Activated CD4-positive, alpha-beta memory T cell treated with anti-CD3 and anti-CD28 coated beads for 36 hours (primary cell): ENCODE measurements at regions of chr17 and their contacts with region 1.

Region 1: DNA sequence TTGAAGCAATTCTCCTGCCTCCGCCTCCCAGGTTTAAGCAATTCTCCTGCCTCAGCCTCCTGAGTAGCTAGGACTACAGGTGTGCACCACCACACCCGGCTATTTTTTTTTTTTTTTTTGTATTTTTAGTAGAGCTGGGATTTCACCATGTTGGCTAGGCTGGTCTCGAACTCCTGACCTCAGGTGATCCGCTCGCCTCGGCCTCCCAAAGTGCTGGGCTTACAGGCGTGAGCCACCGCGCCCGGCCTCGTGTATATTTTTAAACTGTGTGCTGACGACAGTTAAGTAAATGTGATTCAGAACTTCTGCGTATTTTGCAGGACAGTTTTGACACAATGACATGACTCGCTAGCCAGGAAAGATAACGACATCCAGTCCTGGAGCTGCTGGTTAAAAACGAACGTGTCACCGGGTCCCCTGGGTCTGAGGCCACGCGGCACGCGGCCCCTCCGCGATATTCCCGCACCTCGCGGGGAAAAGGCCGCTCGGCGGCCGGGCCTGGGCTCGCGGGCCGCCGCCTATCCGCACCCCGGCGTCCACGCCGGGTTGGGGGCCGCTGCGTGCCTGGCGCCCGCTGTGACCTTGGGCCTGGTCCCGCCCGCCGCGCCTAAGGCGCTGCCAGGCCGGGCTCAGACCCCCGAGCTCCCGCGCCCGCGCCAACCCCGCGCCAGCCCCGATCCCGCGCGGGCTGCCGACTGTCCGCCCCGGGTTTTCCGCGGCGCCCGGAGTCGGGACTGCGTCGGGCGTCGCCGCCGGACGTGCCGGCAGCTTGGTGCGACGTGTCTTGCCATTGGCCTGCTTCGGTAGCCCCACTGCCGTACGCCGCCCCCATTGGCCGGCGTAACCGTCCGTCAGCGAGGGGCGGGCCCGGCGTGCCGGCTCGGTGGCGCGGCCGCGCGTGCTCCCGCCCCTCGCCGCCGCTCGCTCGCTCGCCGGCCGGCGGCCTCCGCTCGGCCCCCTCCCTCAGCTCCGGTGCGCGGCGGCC is at the start of gene FOXK2:
- DNase-seq: peak; percentile 95
- H3K4me3 Mint-ChIP-seq: peak within 1 kb of the TSS; percentile 89
- H3K27ac Mint-ChIP-seq: peak within 1 kb of the TSS; percentile 88
- H3K4me1 Mint-ChIP-seq: peaks cover 20% of the 10 kb centered on the region
- H3K27me3 Mint-ChIP-seq: no peaks in the 10 kb centered on the region
- total RNA-seq, gene FOXK2: 49.3 to 60.8 TPM

Region 2: GRCh38 chr17:82450170-82451106 is 68.7 kb before region 1 on chr17 and contains the start of gene CYBC1:
- CTCF ChIA-PET with region 1: no interaction called
- POLR2A ChIA-PET with region 1: interaction called, 15 read pairs
- intact Hi-C with region 1: loop called (anchors 2 kb)
- DNase-seq: peak; percentile 97
- H3K4me3 Mint-ChIP-seq: peak within 1 kb of the TSS; percentile 85
- H3K27ac Mint-ChIP-seq: peak within 1 kb of the TSS; percentile 99
- H3K4me1 Mint-ChIP-seq: peaks cover 46% of the 10 kb centered on the region
- H3K27me3 Mint-ChIP-seq: no peaks in the 10 kb centered on the region
- total RNA-seq, gene CYBC1: 333 to 343 TPM

Region 3: DNA sequence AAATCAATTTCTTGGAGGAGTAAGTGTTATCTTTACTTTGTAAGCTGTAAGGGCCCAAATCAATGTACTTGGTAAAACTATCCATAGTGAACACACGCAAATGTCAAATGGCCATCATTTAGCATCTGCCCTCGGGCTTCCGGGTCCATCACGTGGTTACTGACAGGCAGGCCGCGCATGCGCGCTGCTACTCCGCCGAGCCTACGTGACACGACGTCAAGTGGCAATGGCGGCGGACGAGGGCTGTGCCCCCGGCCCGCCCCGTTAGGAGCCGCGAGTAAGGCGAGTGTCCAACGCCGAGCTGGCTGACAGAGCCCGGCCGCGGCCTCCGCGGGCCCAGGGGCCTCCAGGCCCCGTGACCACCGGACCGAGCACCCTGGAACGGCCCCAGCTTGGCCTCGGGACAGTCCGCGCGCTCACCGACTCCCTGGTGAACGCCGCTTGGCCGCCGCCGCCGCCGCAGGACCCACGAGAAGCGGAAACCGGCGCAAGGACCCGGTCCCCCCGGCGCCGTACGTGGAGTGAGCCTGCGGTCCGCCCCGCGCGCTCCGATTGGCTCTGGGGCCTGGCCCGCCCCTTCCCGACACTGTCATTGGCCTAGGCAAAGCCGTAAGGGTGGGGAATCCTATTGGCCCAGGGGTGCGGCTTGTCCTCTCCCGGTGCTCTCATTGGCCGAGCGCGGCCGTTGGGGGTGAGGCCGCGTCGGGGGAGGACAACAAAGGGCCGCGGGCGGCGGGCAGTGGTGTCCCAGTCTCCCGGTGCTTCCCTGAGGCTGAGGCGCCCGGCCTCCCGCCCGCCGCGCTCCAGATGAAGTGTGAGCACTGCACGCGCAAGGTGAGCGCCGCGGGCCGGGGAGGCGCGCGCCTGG is 60.9 kb before region 1 on chr17 and contains the start of gene NARF:
- CTCF ChIA-PET with region 1: no interaction called
- POLR2A ChIA-PET with region 1: interaction called, 10 read pairs
- intact Hi-C with region 1: loop called (anchors 2 kb)
- DNase-seq: peak; percentile 97
- H3K4me3 Mint-ChIP-seq: peak within 1 kb of the TSS; percentile 78
- H3K27ac Mint-ChIP-seq: peak within 1 kb of the TSS; percentile 97
- H3K4me1 Mint-ChIP-seq: peaks cover 40% of the 10 kb centered on the region
- H3K27me3 Mint-ChIP-seq: no peaks in the 10 kb centered on the region
- total RNA-seq, gene NARF: 101 to 110 TPM

Region 4: GRCh38 chr17:82494236-82495055 is 24.7 kb before region 1 on chr17:
- CTCF ChIA-PET with region 1: interaction called, 17 read pairs
- POLR2A ChIA-PET with region 1: interaction called, 6 read pairs
- intact Hi-C with region 1: loop called (anchors 1 kb)
- DNase-seq: peak; percentile 94
- H3K4me3 Mint-ChIP-seq: peak overlapping the region; percentile 68
- H3K27ac Mint-ChIP-seq: peak overlapping the region; percentile 89
- H3K4me1 Mint-ChIP-seq: peaks cover 22% of the 10 kb centered on the region
- H3K27me3 Mint-ChIP-seq: no peaks in the 10 kb centered on the region

Region 5: GRCh38 chr17:82507631-82508175 is 11.4 kb before region 1 on chr17:
- CTCF ChIA-PET with region 1: interaction called, 3 read pairs
- POLR2A ChIA-PET with region 1: interaction called, 15 read pairs
- intact Hi-C with region 1: no loop called
- DNase-seq: no peak
- H3K4me3 Mint-ChIP-seq: no peak overlapping the region
- H3K27ac Mint-ChIP-seq: peak overlapping the region; percentile 0
- H3K4me1 Mint-ChIP-seq: peaks cover 12% of the 10 kb centered on the region
- H3K27me3 Mint-ChIP-seq: no peaks in the 10 kb centered on the region

Region 6: GRCh38 chr17:82551779-82552457 is 32.8 kb after region 1 on chr17:
- CTCF ChIA-PET with region 1: interaction called, 13 read pairs
- POLR2A ChIA-PET with region 1: no interaction called
- intact Hi-C with region 1: no loop called
- DNase-seq: peak; percentile 88
- H3K4me3 Mint-ChIP-seq: no peak overlapping the region
- H3K27ac Mint-ChIP-seq: peak overlapping the region; percentile 67
- H3K4me1 Mint-ChIP-seq: peaks cover 34% of the 10 kb centered on the region
- H3K27me3 Mint-ChIP-seq: no peaks in the 10 kb centered on the region